Calu3 (cell line): ENCODE measurements at regions of chr17 and their contacts with region 1.

Region 1: DNA sequence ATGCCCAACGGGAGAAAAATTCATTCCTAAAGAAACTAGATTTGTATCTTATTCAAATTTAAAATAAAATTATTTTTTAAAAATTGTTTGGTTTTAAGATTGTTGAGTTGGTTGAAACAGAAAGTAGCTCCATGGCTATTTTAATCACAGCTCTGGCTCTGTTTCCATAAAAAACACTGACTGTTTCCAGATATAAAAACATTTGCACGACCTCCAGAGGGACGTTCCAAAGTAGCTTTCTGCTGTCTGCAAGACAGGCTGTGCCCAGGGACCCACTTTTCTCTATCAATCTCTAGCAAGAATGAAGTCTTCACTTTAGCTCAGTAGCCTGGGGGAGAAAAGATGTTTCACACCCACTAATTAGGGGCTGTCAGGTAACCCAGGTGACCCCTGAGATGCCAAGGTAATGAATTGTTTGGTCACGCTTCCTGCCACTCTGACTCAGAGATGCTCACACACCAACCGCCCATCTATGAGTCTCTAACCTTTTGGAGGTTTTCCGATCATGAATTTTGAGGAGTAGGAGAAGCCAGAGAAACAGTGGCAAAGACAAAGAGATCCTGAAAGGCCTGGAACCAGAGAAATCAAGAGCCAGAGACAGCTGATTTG is 220.1 kb upstream of the SOX9 start:
- DNase-seq: no peak
- H3K4me3 Mint-ChIP-seq: no peak overlapping the region
- H3K27ac Mint-ChIP-seq: no peak overlapping the region
- H3K4me1 Mint-ChIP-seq: no peaks in the 10 kb centered on the region
- H3K27me3 Mint-ChIP-seq: no peaks in the 10 kb centered on the region
- CTCF ChIP-seq: no peak

Region 2: DNA sequence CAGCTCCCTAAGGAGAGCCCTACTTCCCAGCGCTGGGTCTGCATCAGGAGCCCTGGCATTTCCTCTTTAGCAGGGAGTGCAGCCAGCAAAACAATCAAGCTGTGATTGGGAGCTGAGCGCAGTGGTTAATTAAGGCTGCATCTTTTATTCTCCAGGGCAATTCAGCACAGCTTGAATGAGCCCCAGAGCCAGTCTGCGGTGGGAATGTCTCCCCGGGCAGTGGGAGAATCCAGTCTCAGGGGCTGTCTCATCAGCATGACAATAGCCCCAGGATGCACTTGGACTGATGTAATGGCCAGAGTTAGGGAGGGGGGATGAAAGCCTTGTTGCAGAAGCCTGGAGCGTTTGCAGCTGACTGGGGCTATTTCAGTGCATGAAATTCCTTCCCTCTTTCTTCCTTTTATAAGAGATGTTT is 72.5 kb before region 1 on chr17:
- CTCF ChIA-PET with region 1: no interaction called
- intact Hi-C with region 1: no loop called
- DNase-seq: no peak
- H3K4me3 Mint-ChIP-seq: no peak overlapping the region
- H3K27ac Mint-ChIP-seq: no peak overlapping the region
- H3K4me1 Mint-ChIP-seq: no peaks in the 10 kb centered on the region
- H3K27me3 Mint-ChIP-seq: peaks cover 51% of the 10 kb centered on the region
- CTCF ChIP-seq: no peak

Region 3: GRCh38 chr17:71922439-71922838 is 21.7 kb after region 1 on chr17:
- CTCF ChIA-PET with region 1: interaction called, 10 read pairs
- intact Hi-C with region 1: no loop called
- DNase-seq: no peak
- H3K4me3 Mint-ChIP-seq: no peak overlapping the region
- H3K27ac Mint-ChIP-seq: no peak overlapping the region
- H3K4me1 Mint-ChIP-seq: peaks cover 16% of the 10 kb centered on the region
- H3K27me3 Mint-ChIP-seq: peaks cover 8% of the 10 kb centered on the region
- CTCF ChIP-seq: no peak

Region 4: GRCh38 chr17:72205357-72205756 is 304.6 kb after region 1 on chr17:
- CTCF ChIA-PET with region 1: no interaction called
- intact Hi-C with region 1: no loop called
- DNase-seq: no peak
- H3K4me3 Mint-ChIP-seq: no peak overlapping the region
- H3K27ac Mint-ChIP-seq: no peak overlapping the region
- H3K4me1 Mint-ChIP-seq: no peaks in the 10 kb centered on the region
- H3K27me3 Mint-ChIP-seq: no peaks in the 10 kb centered on the region
- CTCF ChIP-seq: no peak